ENCODE measurements at regions of chr13 and their contacts with region 1.

Region 1: GRCh38 chr13:102724923-102725322 is 30.1 kb upstream of the METTL21C start:
- DNase-seq: no peak
- ATAC-seq: peak; percentile 37 to 67
- H3K4me3 ChIP-seq: no peak overlapping the region
- H3K27ac ChIP-seq: no peak overlapping the region
- H3K4me1 ChIP-seq: peaks cover 9 to 11% of the 10 kb centered on the region in 2 donors
- H3K27me3 ChIP-seq: no peaks in the 10 kb centered on the region
- CTCF ChIP-seq: peak; percentile 56 to 73 (median 66)
- POLR2A ChIP-seq: no peak

Region 2: GRCh38 chr13:102571075-102571474 is 153.8 kb before region 1 on chr13:
- in situ Hi-C with region 1: loop called in 3 of 4 experiments (anchors 5 to 10 kb)
- intact Hi-C with region 1: no loop called
- DNase-seq: no peak
- ATAC-seq: no peak
- H3K4me3 ChIP-seq: no peak overlapping the region
- H3K27ac ChIP-seq: no peak overlapping the region
- H3K4me1 ChIP-seq: no peaks in the 10 kb centered on the region
- H3K27me3 ChIP-seq: no peaks in the 10 kb centered on the region
- CTCF ChIP-seq: no peak
- POLR2A ChIP-seq: no peak

Region 3: GRCh38 chr13:102580552-102581169 is 144.3 kb before region 1 on chr13:
- in situ Hi-C with region 1: loop called in 2 of 4 experiments (anchors 10 kb)
- intact Hi-C with region 1: loop called (anchors 1 kb)
- DNase-seq: no peak
- ATAC-seq: peak; percentile 43 to 65
- H3K4me3 ChIP-seq: no peak overlapping the region
- H3K27ac ChIP-seq: no peak overlapping the region
- H3K4me1 ChIP-seq: peaks cover 8 to 11% of the 10 kb centered on the region in 2 donors
- H3K27me3 ChIP-seq: no peaks in the 10 kb centered on the region
- CTCF ChIP-seq: peak; percentile 55 to 82 (median 65)
- POLR2A ChIP-seq: no peak

Region 4: DNA sequence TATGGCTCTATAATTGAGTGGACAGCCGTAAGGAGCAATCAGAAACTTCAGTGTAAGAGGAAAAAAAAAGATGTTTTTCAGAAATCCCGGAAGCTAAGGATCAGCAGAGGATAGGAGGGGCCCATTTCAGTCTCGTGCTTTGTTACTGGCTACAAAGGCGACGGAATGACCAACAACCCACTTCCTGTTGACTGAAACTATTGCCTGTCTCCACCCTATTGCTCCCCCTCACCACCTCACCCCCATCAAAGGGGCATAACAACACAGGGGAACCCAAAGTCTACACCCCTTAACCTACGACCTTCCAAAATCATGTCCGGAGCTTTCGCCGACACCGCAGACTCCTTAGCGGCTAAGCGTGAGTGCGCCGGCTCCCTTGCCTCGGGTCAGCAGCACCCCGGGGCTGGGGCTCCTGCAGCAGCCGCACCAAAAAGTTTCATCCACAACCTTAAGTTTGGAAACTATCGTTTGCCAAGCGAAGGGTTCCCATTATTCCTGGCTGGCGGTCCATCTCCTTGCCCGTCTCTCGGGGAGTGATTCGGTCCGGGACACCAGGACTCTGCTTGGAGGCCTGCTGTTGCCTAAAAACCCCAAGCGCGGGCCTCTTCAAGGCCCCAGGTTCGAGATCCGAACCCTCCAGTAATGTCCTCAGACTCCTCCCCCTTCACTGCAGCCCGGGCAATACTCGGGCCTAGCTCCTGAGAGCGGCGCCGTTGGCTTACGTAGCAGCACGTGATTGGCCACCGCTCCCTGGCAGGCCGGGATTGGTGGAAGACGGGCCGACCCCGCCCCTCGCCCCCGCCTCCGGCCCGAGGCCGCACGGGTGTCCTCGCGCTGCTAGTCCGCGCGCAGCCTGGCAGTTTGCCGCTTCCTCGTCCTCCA is 128.5 kb before region 1 on chr13 and contains the start of gene TPP2:
- in situ Hi-C with region 1: loop called in 2 of 4 experiments (anchors 5 kb)
- intact Hi-C with region 1: loop called (anchors 1 kb)
- DNase-seq: peak; percentile 99
- ATAC-seq: peak; percentile 88 to 89
- H3K4me3 ChIP-seq: peak within 1 kb of the TSS; percentile 63 to 99 (median 86)
- H3K27ac ChIP-seq: peak within 1 kb of the TSS; percentile 93 to 100 (median 96)
- H3K4me1 ChIP-seq: peaks cover 42 to 48% of the 10 kb centered on the region in 2 donors
- H3K27me3 ChIP-seq: no peaks in the 10 kb centered on the region
- CTCF ChIP-seq: peak in 1 of 5 experiments; percentile 8
- POLR2A ChIP-seq: peak; percentile 92
- total RNA-seq, gene TPP2: 38.2 to 78.2 (median 68.1) TPM

Region 5: GRCh38 chr13:102678339-102679107 is 46.4 kb before region 1 on chr13:
- in situ Hi-C with region 1: no loop called
- intact Hi-C with region 1: loop called (anchors 2 kb)
- DNase-seq: peak in 1 of 2 donors; percentile 64
- ATAC-seq: peak; percentile 60 to 62
- H3K4me3 ChIP-seq: no peak overlapping the region
- H3K27ac ChIP-seq: peak overlapping the region; percentile 67 to 80 (median 68)
- H3K4me1 ChIP-seq: peaks cover 32 to 37% of the 10 kb centered on the region in 2 donors
- H3K27me3 ChIP-seq: no peaks in the 10 kb centered on the region
- CTCF ChIP-seq: no peak
- POLR2A ChIP-seq: no peak

Region 6: DNA sequence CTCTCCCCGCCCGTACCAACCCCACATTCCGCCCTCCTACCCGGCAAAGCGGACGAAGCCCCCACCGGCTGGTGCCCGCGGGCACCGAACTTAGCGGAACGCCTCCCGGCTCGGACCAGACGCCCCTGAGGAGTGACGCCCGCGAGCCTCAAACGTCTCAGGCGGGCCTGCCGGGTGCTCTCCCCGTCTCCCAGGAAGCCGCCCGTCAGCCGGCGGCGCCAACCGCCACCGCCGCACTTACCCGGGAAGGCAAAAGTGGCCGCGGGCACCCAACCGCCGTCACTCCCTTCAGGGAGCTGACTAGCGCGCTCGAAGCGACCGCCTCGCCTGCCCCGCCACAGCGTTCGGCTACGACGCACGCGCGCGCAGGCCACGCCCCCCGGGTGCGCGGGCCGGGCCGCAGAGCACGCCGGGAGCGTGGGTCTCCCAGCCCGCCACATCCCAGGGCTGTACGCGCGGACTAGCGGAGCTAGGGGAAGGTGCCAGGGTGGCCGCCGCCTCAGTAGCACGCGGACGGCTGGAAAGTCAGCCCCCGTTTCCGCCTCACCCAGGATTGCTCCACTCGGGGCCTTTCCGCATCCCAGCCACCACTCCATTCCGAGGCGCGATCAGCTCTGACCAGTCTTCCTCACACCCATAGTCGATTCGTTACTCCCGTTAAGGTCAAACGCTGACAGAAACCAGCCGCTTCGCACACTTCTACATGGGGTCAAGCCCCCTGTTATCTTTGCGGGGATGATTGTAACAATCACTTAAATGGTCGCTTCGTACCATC is 48.7 kb after region 1 on chr13 and contains the start of gene TEX30:
- in situ Hi-C with region 1: no loop called
- intact Hi-C with region 1: loop called (anchors 2 kb)
- DNase-seq: peak; percentile 50 to 73
- ATAC-seq: peak; percentile 96
- H3K4me3 ChIP-seq: peak within 1 kb of the TSS; percentile 72 to 91 (median 74)
- H3K27ac ChIP-seq: peak within 1 kb of the TSS; percentile 80 to 85 (median 80)
- H3K4me1 ChIP-seq: peaks cover 7 to 9% of the 10 kb centered on the region in 2 donors
- H3K27me3 ChIP-seq: no peaks in the 10 kb centered on the region
- CTCF ChIP-seq: no peak
- POLR2A ChIP-seq: peak; percentile 81 to 86
- total RNA-seq, gene TEX30: 3.5 to 11.6 (median 10.2) TPM

Region 7: GRCh38 chr13:102800145-102801041 is 75.5 kb after region 1 on chr13:
- in situ Hi-C with region 1: no loop called
- intact Hi-C with region 1: loop called (anchors 5 kb)
- DNase-seq: peak; percentile 57 to 77
- ATAC-seq: peak; percentile 75 to 83
- H3K4me3 ChIP-seq: peak overlapping the region; percentile 68 to 87 (median 78)
- H3K27ac ChIP-seq: peak overlapping the region; percentile 75 to 91 (median 89)
- H3K4me1 ChIP-seq: peaks cover 25 to 29% of the 10 kb centered on the region in 2 donors
- H3K27me3 ChIP-seq: no peaks in the 10 kb centered on the region
- CTCF ChIP-seq: peak; percentile 63 to 82 (median 76)
- POLR2A ChIP-seq: no peak